ENCODE measurements at regions of chr1 and their contacts with region 1.

Region 1: DNA sequence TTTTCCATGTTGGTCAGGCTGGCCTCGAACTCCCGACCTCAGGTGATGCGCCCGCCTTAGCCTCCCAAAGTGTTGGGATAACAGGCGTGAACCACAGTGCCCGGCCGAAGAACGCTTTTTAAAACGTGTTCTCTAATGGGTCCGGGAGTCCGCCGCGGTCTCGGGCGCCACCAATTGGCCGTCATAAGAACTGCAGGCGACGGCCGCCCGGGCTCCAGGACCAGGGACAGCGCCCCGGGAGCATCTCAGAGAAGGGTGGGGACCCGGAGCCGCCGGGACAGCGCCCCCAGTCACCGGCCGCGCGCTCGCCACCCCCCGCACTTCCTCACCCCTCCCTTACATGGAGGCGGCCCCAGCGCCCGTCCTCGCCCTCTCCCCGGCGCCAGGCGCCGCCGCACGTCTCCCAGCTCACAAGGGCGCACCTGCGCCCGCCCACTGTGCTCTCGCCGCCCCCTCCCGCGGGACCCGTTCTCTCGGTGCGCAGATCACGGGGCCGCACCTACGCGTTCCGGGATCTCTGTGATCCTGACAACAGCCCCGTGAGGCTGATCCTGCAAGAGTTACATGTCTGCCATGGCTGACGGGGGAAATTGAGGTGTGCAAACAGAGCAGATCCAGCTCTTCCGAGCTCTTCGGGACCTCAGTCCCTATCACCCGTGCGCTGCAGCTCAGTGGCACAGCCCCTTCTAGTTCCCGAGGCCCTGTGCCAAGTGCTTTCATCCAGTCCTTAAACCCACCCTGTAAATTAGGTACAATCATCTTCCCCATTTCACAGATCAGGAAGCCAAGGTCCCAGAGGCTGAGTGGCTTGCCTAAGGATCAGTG is 9.8 kb downstream of the RAP1GAP start:
- DNase-seq: peak; percentile 68
- H3K4me3 ChIP-seq: no peak overlapping the region
- H3K27ac ChIP-seq: no peak overlapping the region
- H3K4me1 ChIP-seq: peaks cover 3% of the 10 kb centered on the region
- H3K27me3 ChIP-seq: peaks cover 7% of the 10 kb centered on the region
- CTCF ChIP-seq: peak; percentile 87

Region 2: DNA sequence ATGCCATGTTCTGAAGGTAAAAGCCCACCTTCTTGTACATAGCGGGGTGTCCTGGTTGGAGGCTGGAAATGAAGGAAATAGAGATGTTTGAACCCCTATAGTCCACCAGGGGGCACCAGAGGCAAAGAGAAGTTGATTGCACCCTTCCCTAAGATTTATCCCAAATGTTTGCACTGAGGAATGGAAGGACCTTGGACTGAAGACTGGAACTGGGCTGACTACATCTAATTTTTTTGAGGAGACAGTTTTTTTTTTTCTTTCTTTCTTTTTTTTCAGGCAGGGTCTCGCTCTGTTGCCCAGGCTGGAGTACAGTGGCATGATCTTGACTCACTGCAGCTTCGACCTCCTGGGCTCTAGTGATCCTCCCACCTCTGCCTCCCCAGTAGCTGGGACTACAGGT is 427.3 kb before region 1 on chr1:
- intact Hi-C with region 1: loop called (anchors 10 kb)
- DNase-seq: peak; percentile 67
- H3K4me3 ChIP-seq: no peak overlapping the region
- H3K27ac ChIP-seq: no peak overlapping the region
- H3K4me1 ChIP-seq: no peaks in the 10 kb centered on the region
- H3K27me3 ChIP-seq: no peaks in the 10 kb centered on the region
- CTCF ChIP-seq: peak; percentile 77